ENCODE measurements at regions of chr17 and their contacts with region 1.

Region 1: GRCh38 chr17:59651346-59651745 is 31.7 kb downstream of the CLTC start:
- DNase-seq: no peak
- ATAC-seq: no peak
- H3K4me3 ChIP-seq: no peak overlapping the region
- H3K27ac ChIP-seq: no peak overlapping the region
- H3K4me1 ChIP-seq: no peaks in the 10 kb centered on the region
- H3K27me3 ChIP-seq: no peaks in the 10 kb centered on the region
- CTCF ChIP-seq: no peak

Region 2: GRCh38 chr17:59423137-59423703 is 228.1 kb before region 1 on chr17:
- intact Hi-C with region 1: no loop called
- DNase-seq: no peak
- ATAC-seq: no peak
- H3K4me3 ChIP-seq: no peak overlapping the region
- H3K27ac ChIP-seq: no peak overlapping the region
- H3K4me1 ChIP-seq: peaks cover 35% of the 10 kb centered on the region
- H3K27me3 ChIP-seq: no peaks in the 10 kb centered on the region
- CTCF ChIP-seq: no peak

Region 3: DNA sequence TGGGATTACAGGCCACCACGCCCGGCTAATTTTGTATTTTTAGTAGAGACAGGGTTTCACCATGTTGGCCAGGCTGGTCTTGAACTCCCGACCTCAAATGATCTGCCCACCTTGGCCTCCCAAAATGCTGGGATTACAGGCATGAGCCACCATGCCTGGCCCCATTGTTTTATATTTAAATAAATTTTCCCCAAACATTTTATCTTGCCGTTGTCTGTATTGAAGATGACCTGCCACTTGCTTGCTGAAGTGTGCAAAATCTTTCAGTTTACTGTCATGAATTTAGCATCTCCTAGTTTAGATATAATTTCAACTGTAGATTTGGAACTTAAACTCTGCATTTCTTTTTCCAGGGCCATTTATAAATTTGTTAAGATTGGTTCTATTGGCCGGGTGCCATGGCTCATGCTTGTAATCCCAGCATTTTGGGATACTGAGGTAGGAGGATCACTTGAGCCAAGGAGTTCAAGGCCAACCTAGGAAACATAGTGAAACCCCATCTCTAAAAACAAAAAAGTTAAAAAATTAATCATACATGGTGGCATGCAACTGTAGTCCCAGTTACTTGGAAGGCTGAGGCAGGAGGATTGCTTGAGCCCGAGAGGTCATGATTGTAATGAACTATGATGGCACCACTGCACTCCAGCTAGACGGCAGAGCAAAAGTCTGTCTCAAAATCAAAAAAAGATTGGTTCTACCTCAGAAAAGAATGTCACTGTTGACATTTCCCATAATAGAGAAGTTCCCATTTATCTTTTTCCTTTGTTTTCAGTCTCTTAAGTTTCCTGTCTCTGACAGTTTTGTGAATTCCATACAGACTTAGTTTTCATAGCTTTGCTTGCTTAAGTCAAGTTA is 140.5 kb after region 1 on chr17:
- intact Hi-C with region 1: no loop called
- DNase-seq: no peak
- ATAC-seq: no peak
- H3K4me3 ChIP-seq: no peak overlapping the region
- H3K27ac ChIP-seq: peak overlapping the region; percentile 81
- H3K4me1 ChIP-seq: peaks cover 43% of the 10 kb centered on the region
- H3K27me3 ChIP-seq: no peaks in the 10 kb centered on the region
- CTCF ChIP-seq: no peak

Region 4: GRCh38 chr17:60065136-60065535 is 413.8 kb after region 1 on chr17:
- intact Hi-C with region 1: loop called (anchors 10 kb)
- DNase-seq: no peak
- ATAC-seq: no peak
- H3K4me3 ChIP-seq: no peak overlapping the region
- H3K27ac ChIP-seq: no peak overlapping the region
- H3K4me1 ChIP-seq: no peaks in the 10 kb centered on the region
- H3K27me3 ChIP-seq: no peaks in the 10 kb centered on the region
- CTCF ChIP-seq: no peak

Measured in upper lobe of right lung (tissue), 1 donor.